PC-3 (cell line): ENCODE measurements at regions of chr1 and their contacts with region 1.

Region 1: GRCh38 chr1:29513357-29513756 is 277.0 kb downstream of the PTPRU start:
- DNase-seq: peak; percentile 85
- ATAC-seq: peak; percentile 99
- H3K4me3 ChIP-seq: no peak overlapping the region
- H3K27ac ChIP-seq: no peak overlapping the region
- H3K4me1 ChIP-seq: no peaks in the 10 kb centered on the region
- H3K27me3 ChIP-seq: 0 out of 2 replicates have a peak, but pooled peaks cover 7% of the 10 kb centered on the region
- CTCF ChIP-seq: peak; percentile 93

Region 2: GRCh38 chr1:29649189-29650040 is 136.1 kb after region 1 on chr1:
- CTCF ChIA-PET with region 1: no interaction called
- POLR2A ChIA-PET with region 1: no interaction called
- intact Hi-C with region 1: loop called (anchors 5 kb)
- DNase-seq: peak; percentile 96
- ATAC-seq: peak; percentile 79
- H3K4me3 ChIP-seq: peak overlapping the region; percentile 4; the same call in 1 of the 2 replicates
- H3K27ac ChIP-seq: peak overlapping the region; percentile 78
- H3K4me1 ChIP-seq: peaks cover 34% of the 10 kb centered on the region
- H3K27me3 ChIP-seq: no peaks in the 10 kb centered on the region
- CTCF ChIP-seq: no peak

Region 3: GRCh38 chr1:29849038-29849750 is 335.8 kb after region 1 on chr1:
- CTCF ChIA-PET with region 1: no interaction called
- POLR2A ChIA-PET with region 1: no interaction called
- intact Hi-C with region 1: loop called (anchors 1 kb)
- DNase-seq: peak; percentile 83
- ATAC-seq: peak; percentile 81
- H3K4me3 ChIP-seq: no peak overlapping the region
- H3K27ac ChIP-seq: no peak overlapping the region
- H3K4me1 ChIP-seq: no peaks in the 10 kb centered on the region
- H3K27me3 ChIP-seq: peaks cover 3% of the 10 kb centered on the region; the same call in 1 of the 2 replicates
- CTCF ChIP-seq: peak; percentile 79

Region 4: GRCh38 chr1:30379684-30380624 is 866.6 kb after region 1 on chr1:
- CTCF ChIA-PET with region 1: no interaction called
- POLR2A ChIA-PET with region 1: no interaction called
- intact Hi-C with region 1: loop called (anchors 10 kb)
- DNase-seq: peak; percentile 78
- ATAC-seq: peak; percentile 80
- H3K4me3 ChIP-seq: no peak overlapping the region
- H3K27ac ChIP-seq: no peak overlapping the region
- H3K4me1 ChIP-seq: no peaks in the 10 kb centered on the region
- H3K27me3 ChIP-seq: peaks cover 12% of the 10 kb centered on the region; the same call in 1 of the 2 replicates
- CTCF ChIP-seq: peak; percentile 78

Region 5: GRCh38 chr1:30707412-30708360 is 1194.3 kb after region 1 on chr1:
- CTCF ChIA-PET with region 1: no interaction called
- POLR2A ChIA-PET with region 1: no interaction called
- intact Hi-C with region 1: loop called (anchors 10 kb)
- DNase-seq: peak; percentile 77
- ATAC-seq: peak; percentile 93
- H3K4me3 ChIP-seq: no peak overlapping the region
- H3K27ac ChIP-seq: no peak overlapping the region
- H3K4me1 ChIP-seq: no peaks in the 10 kb centered on the region
- H3K27me3 ChIP-seq: peaks cover 8% of the 10 kb centered on the region; the same call in 1 of the 2 replicates
- CTCF ChIP-seq: peak; percentile 90